Panc1 (cell line): ENCODE measurements at regions of chr21 and their contacts with region 1.

Region 1: DNA sequence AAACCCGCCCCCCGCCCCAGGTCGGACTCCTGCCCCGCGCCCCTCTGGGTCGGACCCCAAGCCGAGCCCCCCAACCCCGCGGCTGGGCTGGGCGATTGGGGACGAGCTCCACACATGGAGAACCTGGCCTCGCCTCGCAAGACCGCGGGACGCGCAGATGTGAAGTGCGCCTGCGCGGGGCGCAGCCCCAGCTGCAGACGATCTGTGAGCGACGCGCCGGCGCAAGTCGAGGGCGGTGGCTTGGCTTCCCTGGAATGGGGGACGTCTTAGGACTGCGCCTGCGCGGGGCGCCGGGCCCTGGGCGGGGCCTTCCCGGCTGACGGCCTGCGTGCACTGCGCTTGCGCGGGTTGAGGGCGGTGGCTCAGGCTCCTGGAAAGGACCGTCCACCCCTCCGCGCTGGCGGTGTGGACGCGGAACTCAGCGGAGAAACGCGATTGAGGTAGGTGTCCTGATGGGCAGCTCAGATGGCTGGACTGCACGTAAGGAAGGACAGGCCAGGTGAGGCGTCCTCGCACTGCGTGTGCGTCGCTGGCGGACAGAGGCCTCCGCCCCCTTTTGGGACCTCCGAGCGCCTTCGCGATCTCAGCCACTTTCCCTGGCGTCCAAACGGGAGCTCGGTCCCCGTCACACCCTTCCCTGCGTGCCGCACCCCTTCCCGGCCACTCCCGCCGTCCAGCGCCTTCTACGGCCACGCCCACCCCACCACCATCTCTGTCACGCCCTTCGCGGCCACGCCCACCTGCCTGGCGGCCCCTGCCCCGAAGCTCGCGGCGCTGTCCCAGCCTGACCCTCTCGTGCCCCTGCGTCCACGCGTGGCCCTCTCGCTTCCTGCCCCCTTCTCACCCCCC is at the start of gene PRMT2:
- DNase-seq: peak; percentile 73
- ATAC-seq: peak; percentile 95
- H3K4me3 ChIP-seq: peak within 1 kb of the TSS; percentile 82 to 83
- H3K27ac ChIP-seq: peak within 1 kb of the TSS; percentile 88
- H3K4me1 ChIP-seq: peaks cover 12% of the 10 kb centered on the region; the same call in 1 of the 2 replicates
- H3K27me3 ChIP-seq: no peaks in the 10 kb centered on the region
- CTCF ChIP-seq: no peak
- total RNA-seq, gene PRMT2: 60.5 TPM

Region 2: GRCh38 chr21:46228345-46229051 is 407.1 kb before region 1 on chr21 and contains the start of gene LSS:
- CTCF ChIA-PET with region 1: no interaction called
- POLR2A ChIA-PET with region 1: interaction called, 13 read pairs
- in situ Hi-C with region 1: no loop called
- intact Hi-C with region 1: no loop called
- DNase-seq: peak; percentile 72
- ATAC-seq: peak; percentile 97
- H3K4me3 ChIP-seq: peak within 1 kb of the TSS; percentile 59 to 63
- H3K27ac ChIP-seq: peak within 1 kb of the TSS; percentile 77
- H3K4me1 ChIP-seq: peaks cover 11% of the 10 kb centered on the region
- H3K27me3 ChIP-seq: no peaks in the 10 kb centered on the region
- CTCF ChIP-seq: no peak
- total RNA-seq, gene LSS: 111 TPM

Region 3: GRCh38 chr21:46661211-46661625 is 25.7 kb after region 1 on chr21:
- CTCF ChIA-PET with region 1: interaction called, 16 read pairs
- POLR2A ChIA-PET with region 1: no interaction called
- in situ Hi-C with region 1: no loop called
- intact Hi-C with region 1: no loop called
- DNase-seq: no peak
- ATAC-seq: peak; percentile 79
- H3K4me3 ChIP-seq: no peak overlapping the region
- H3K27ac ChIP-seq: no peak overlapping the region
- H3K4me1 ChIP-seq: peaks cover 3% of the 10 kb centered on the region; the same call in 1 of the 2 replicates
- H3K27me3 ChIP-seq: no peaks in the 10 kb centered on the region
- CTCF ChIP-seq: peak; percentile 95

Region 4: DNA sequence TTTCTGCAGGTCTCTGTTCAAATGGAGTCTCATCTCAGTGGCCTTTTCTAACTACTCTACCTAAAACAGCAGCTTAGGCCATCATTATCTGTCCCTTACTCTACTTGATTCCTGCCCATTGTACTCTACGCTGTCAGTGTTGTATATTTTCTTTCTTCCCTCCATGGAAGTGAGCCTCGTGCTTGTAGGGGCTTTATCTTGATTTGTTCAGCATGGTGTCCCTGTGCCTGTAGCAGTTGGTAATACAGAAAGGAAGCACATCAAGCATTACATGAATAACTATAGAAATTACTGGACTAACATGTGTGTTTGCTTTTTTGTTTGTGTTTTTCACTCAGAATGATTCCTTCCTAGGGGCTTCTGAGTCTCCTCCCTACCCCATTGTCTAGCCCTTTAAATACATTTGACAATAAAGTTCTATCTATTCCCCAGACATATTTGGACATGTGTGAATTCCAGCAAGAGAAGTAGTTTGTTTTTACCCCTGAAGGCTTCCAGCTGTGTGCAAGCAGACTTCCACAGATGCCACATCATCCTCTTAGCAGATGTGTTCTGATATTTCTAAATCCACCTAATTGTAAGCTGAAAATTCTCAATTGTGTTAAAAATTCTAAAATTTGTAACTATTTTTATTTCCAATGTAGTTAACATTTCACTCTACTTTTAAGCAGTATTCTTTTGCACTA is 40.2 kb after region 1 on chr21:
- CTCF ChIA-PET with region 1: no interaction called
- POLR2A ChIA-PET with region 1: no interaction called
- in situ Hi-C with region 1: no loop called
- intact Hi-C with region 1: no loop called
- DNase-seq: no peak
- ATAC-seq: no peak
- H3K4me3 ChIP-seq: no peak overlapping the region
- H3K27ac ChIP-seq: no peak overlapping the region
- H3K4me1 ChIP-seq: no peaks in the 10 kb centered on the region
- H3K27me3 ChIP-seq: no peaks in the 10 kb centered on the region
- CTCF ChIP-seq: no peak